SK-N-SH (cell line): ENCODE measurements at regions of chr2 and their contacts with region 1.

Region 1: DNA sequence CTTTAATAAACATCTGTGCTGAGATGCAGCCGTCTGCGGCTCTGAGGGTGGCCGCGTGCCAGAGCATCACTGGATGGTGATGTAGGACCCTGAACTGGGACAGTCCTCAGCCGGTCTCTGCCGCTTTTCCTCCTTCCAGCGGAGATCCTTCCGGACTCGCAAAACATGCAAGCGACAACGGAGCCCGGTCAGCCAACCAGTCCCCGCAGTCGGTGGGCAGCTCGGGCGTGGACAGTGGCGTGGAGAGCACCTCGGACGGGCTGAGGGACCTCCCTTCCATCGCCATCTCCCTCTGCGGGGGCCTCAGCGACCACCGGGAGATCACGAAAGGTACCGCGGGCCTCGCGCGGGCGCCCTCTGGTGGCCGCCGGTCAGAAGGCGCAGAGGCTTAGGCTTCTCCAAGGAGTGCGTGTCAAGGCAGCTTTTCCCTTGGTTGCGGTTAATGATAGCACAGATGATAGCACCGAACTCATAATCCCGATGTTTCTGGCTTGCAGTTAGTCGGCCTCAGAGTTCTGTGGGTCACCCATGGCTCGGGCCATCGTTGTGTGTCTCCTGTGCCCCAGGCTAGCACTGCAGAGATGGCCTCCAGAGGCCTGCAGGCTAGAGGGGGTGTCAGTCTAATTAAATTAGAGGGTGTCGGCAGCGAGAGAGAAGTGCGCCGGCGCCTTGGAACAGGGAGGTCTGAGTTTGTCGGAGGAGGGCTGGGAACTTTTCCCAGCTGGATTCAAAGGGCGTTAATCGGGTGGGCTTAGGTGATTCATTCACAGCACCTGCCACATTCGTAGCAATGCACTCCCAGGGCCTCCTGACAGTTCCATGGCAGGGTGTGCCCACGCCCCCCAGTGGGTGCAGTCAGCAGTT is 38.5 kb downstream of the LPIN1 start:
- DNase-seq: peak; percentile 91
- H3K4me3 ChIP-seq: no peak overlapping the region; a peak in 1 of 4 replicates
- H3K27ac ChIP-seq: no peak overlapping the region
- H3K4me1 ChIP-seq: peaks cover 0 to 9% of the 10 kb centered on the region in 2 experiments; a peak in 1 of 4 replicates
- H3K27me3 ChIP-seq: no peaks in the 10 kb centered on the region
- CTCF ChIP-seq: peak; percentile 90
- EP300 ChIP-seq: no peak
- RAD21 ChIP-seq: peak; percentile 63

Region 2: DNA sequence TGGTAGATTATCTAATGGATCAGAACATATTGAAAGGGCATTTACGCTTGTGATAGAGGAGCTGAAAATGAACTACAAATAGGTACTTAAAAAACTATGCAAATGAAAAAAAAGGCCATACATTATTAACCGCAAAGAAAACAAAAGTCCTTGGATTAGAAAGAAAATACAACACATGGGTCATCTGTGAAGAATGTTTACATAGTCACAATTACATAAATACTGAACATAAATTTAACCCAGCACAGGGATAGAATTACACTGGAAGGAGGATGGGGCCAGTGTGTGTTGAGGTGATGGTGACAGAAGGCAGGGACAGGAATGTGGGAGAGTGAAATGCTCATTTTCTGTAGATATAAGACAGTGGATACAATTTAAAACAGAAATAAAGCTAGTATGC is 121.6 kb before region 1 on chr2:
- CTCF ChIA-PET with region 1: interaction called, 10 read pairs
- POLR2A ChIA-PET with region 1: no interaction called
- DNase-seq: no peak
- H3K4me3 ChIP-seq: no peak overlapping the region; a peak in 1 of 4 replicates
- H3K27ac ChIP-seq: no peak overlapping the region
- H3K4me1 ChIP-seq: no peaks in the 10 kb centered on the region
- H3K27me3 ChIP-seq: no peaks in the 10 kb centered on the region; the same call in 1 of the 2 replicates
- CTCF ChIP-seq: no peak
- EP300 ChIP-seq: no peak
- RAD21 ChIP-seq: no peak

Region 3: GRCh38 chr2:11716689-11717321 is 68.2 kb before region 1 on chr2:
- CTCF ChIA-PET with region 1: interaction called, 26 read pairs
- POLR2A ChIA-PET with region 1: no interaction called
- DNase-seq: no peak
- H3K4me3 ChIP-seq: no peak overlapping the region
- H3K27ac ChIP-seq: no peak overlapping the region
- H3K4me1 ChIP-seq: peaks cover 0 to 51% of the 10 kb centered on the region in 2 experiments; a peak in 2 of 4 replicates
- H3K27me3 ChIP-seq: peaks cover 23% of the 10 kb centered on the region; the same call in 1 of the 2 replicates
- CTCF ChIP-seq: no peak
- EP300 ChIP-seq: no peak
- RAD21 ChIP-seq: no peak

Region 4: GRCh38 chr2:11764359-11764758 is 20.6 kb before region 1 on chr2:
- CTCF ChIA-PET with region 1: interaction called, 80 read pairs
- POLR2A ChIA-PET with region 1: no interaction called
- DNase-seq: peak; percentile 89
- H3K4me3 ChIP-seq: no peak overlapping the region
- H3K27ac ChIP-seq: peak overlapping the region in 1 of 2 experiments; percentile 97; a peak in 2 of 4 replicates
- H3K4me1 ChIP-seq: peaks cover 0 to 48% of the 10 kb centered on the region in 2 experiments; a peak in 2 of 4 replicates
- H3K27me3 ChIP-seq: no peaks in the 10 kb centered on the region
- CTCF ChIP-seq: no peak
- EP300 ChIP-seq: peak in 1 of 2 experiments; percentile 97; a peak in 2 of 4 replicates
- RAD21 ChIP-seq: peak; percentile 32

Region 5: GRCh38 chr2:11796190-11797171 is 11.5 kb after region 1 on chr2:
- CTCF ChIA-PET with region 1: interaction called, 48 read pairs
- POLR2A ChIA-PET with region 1: no interaction called
- DNase-seq: no peak
- H3K4me3 ChIP-seq: no peak overlapping the region
- H3K27ac ChIP-seq: no peak overlapping the region
- H3K4me1 ChIP-seq: peaks cover 0 to 6% of the 10 kb centered on the region in 2 experiments; a peak in 1 of 4 replicates
- H3K27me3 ChIP-seq: no peaks in the 10 kb centered on the region
- CTCF ChIP-seq: no peak
- EP300 ChIP-seq: no peak
- RAD21 ChIP-seq: no peak